Caco-2 (cell line): ENCODE measurements at regions of chr15 and their contacts with region 1.

Region 1: GRCh38 chr15:39874890-39875549 is 45.0 kb downstream of the GPR176 start:
- DNase-seq: peak in 1 of 2 experiments; percentile 46
- H3K4me3 ChIP-seq: no peak overlapping the region
- H3K4me3 Mint-ChIP-seq: no peak overlapping the region
- H3K27ac Mint-ChIP-seq: no peak overlapping the region
- H3K4me1 ChIP-seq: peaks cover 5% of the 10 kb centered on the region; the same call in 1 of the 2 replicates
- H3K4me1 Mint-ChIP-seq: peaks cover 24% of the 10 kb centered on the region
- H3K27me3 ChIP-seq: no peaks in the 10 kb centered on the region
- H3K27me3 Mint-ChIP-seq: no peaks in the 10 kb centered on the region
- CTCF ChIP-seq: peak; percentile 49 to 67

Region 2: GRCh38 chr15:39686000-39686613 is 188.9 kb before region 1 on chr15:
- CTCF ChIA-PET with region 1: no interaction called
- POLR2A ChIA-PET with region 1: no interaction called
- intact Hi-C with region 1: loop called (anchors 5 kb)
- DNase-seq: peak; percentile 47 to 65
- H3K4me3 ChIP-seq: no peak overlapping the region
- H3K4me3 Mint-ChIP-seq: no peak overlapping the region
- H3K27ac Mint-ChIP-seq: no peak overlapping the region
- H3K4me1 ChIP-seq: peaks cover 45% of the 10 kb centered on the region
- H3K4me1 Mint-ChIP-seq: peaks cover 38% of the 10 kb centered on the region
- H3K27me3 ChIP-seq: no peaks in the 10 kb centered on the region
- H3K27me3 Mint-ChIP-seq: no peaks in the 10 kb centered on the region
- CTCF ChIP-seq: peak; percentile 52 to 78

Region 3: DNA sequence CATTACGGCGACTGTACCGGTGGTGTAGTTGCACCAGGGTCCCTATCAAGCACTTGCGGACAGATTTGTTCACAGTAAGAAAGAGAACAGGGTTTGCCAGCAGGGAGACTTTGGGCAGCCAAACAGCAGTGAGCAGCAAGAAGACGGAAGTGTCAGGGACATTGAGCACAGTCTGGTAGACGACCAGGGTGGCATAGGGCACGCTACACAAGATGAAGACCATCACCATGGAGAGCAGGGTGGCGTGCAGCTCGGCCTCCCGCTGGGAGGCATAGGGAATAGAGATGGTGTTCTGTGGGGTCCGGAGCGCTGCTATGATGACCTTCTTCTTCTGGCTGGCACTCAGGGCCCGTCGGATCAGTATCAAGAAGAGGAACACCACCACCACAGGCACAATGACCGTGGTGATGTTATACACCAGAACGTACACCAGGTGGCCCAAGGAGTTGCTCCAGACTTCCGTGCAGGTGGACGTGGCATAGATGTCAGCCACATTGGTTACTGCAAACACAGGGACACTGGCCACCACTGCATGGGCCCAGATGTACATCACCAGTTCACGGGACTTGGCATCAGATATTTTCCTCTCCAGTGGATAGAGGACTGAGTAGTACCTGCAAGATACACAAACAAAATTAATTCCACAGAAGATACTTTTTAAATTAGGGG is 73.2 kb before region 1 on chr15:
- CTCF ChIA-PET with region 1: interaction called, 3 read pairs
- POLR2A ChIA-PET with region 1: no interaction called
- intact Hi-C with region 1: loop called (anchors 1 kb)
- DNase-seq: peak; percentile 55
- H3K4me3 ChIP-seq: no peak overlapping the region
- H3K4me3 Mint-ChIP-seq: no peak overlapping the region
- H3K27ac Mint-ChIP-seq: no peak overlapping the region
- H3K4me1 ChIP-seq: peaks cover 3% of the 10 kb centered on the region; the same call in 1 of the 2 replicates
- H3K4me1 Mint-ChIP-seq: peaks cover 8% of the 10 kb centered on the region
- H3K27me3 ChIP-seq: no peaks in the 10 kb centered on the region
- H3K27me3 Mint-ChIP-seq: no peaks in the 10 kb centered on the region
- CTCF ChIP-seq: peak; percentile 44 to 60

Region 4: GRCh38 chr15:40160689-40161688 is 286.0 kb after region 1 on chr15 and contains the start of gene BUB1B:
- CTCF ChIA-PET with region 1: no interaction called
- POLR2A ChIA-PET with region 1: no interaction called
- intact Hi-C with region 1: no loop called
- DNase-seq: peak; percentile 95
- H3K4me3 ChIP-seq: peak within 1 kb of the TSS; percentile 82
- H3K4me3 Mint-ChIP-seq: no peak within 1 kb of the TSS
- H3K27ac Mint-ChIP-seq: no peak within 1 kb of the TSS
- H3K4me1 ChIP-seq: peaks cover 18% of the 10 kb centered on the region
- H3K4me1 Mint-ChIP-seq: peaks cover under 1% of the 10 kb centered on the region
- H3K27me3 ChIP-seq: no peaks in the 10 kb centered on the region
- H3K27me3 Mint-ChIP-seq: no peaks in the 10 kb centered on the region
- CTCF ChIP-seq: no peak
- total RNA-seq, gene BUB1B: 62.7 and 73.5 TPM in 2 replicates